A673 (cell line): ENCODE measurements at regions of chr3 and their contacts with region 1.

Region 1: GRCh38 chr3:125374996-125375941 is at the start of gene ZNF148:
- DNase-seq: peak; percentile 92
- H3K4me3 ChIP-seq: peak within 1 kb of the TSS; percentile 85
- H3K27ac ChIP-seq: peak within 1 kb of the TSS; percentile 90
- H3K4me1 ChIP-seq: peaks cover 9% of the 10 kb centered on the region
- H3K27me3 ChIP-seq: no peaks in the 10 kb centered on the region
- CTCF ChIP-seq: no peak; the same call in 1 of the 2 replicates
- total RNA-seq, gene ZNF148: 45.1 and 47.8 TPM in 2 replicates

Region 2: DNA sequence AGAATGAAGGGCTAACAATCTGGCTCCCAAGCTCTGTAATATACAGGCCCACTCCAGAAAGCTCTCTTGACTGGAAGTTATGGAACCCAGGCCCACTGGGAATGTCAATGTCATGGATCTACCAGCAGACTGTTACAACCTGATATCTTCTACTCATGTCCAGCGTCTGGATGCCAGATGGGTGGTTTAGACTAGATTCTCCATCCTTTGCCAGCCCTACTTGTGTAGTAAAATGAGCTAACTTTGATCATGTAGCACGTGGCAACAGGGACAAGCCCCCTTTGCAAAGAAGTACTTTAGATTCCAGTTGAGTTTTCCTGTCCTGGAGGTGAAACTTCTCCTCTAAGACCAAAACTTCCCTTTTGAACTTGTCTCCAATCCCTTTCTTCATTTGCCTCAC is 374.6 kb before region 1 on chr3:
- CTCF ChIA-PET with region 1: interaction called, 11 read pairs
- POLR2A ChIA-PET with region 1: no interaction called
- intact Hi-C with region 1: no loop called
- DNase-seq: no peak
- H3K4me3 ChIP-seq: no peak overlapping the region
- H3K27ac ChIP-seq: no peak overlapping the region
- H3K4me1 ChIP-seq: peaks cover 12% of the 10 kb centered on the region
- H3K27me3 ChIP-seq: no peaks in the 10 kb centered on the region
- CTCF ChIP-seq: no peak

Region 3: DNA sequence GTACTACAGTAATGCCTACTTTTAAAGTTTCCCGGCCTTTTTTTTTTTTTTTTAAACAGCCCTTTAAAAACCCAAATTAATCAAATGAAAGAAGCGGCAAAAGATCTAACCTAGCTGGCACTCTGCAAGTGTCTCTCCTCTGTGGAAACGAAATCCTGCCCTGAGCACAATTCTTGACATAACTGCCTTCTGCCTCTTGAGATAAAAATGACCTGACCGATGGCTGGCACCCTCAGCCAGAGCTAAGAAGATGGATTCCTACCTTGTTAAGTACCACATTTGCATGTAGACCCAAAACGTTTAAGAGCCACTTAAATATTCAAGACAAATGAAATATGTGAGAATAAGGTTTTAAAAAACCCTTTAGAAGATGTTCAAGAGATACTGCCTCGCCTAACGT is 146.1 kb before region 1 on chr3:
- CTCF ChIA-PET with region 1: interaction called, 10 read pairs
- POLR2A ChIA-PET with region 1: no interaction called
- intact Hi-C with region 1: no loop called
- DNase-seq: no peak
- H3K4me3 ChIP-seq: no peak overlapping the region
- H3K27ac ChIP-seq: no peak overlapping the region
- H3K4me1 ChIP-seq: peaks cover 12% of the 10 kb centered on the region
- H3K27me3 ChIP-seq: no peaks in the 10 kb centered on the region
- CTCF ChIP-seq: no peak